Ascending aorta (tissue), 2 donors: ENCODE measurements at regions of chr3 and their contacts with region 1.

Region 1: GRCh38 chr3:149650828-149651227 is 7.0 kb downstream of the WWTR1 start:
- DNase-seq: no peak
- H3K4me3 ChIP-seq: peak overlapping the region in 1 of 2 donors; percentile 14
- H3K27ac ChIP-seq: peak overlapping the region; percentile 4 to 59
- H3K4me1 ChIP-seq: peaks cover 25 to 41% of the 10 kb centered on the region in 2 donors
- H3K27me3 ChIP-seq: no peaks in the 10 kb centered on the region
- CTCF ChIP-seq: no peak

Region 2: GRCh38 chr3:149596136-149596770 is 54.6 kb before region 1 on chr3:
- intact Hi-C with region 1: loop called (anchors 2 kb)
- DNase-seq: no peak
- H3K4me3 ChIP-seq: peak overlapping the region in 1 of 2 donors; percentile 25
- H3K27ac ChIP-seq: peak overlapping the region; percentile 55 to 70
- H3K4me1 ChIP-seq: peaks cover 19 to 76% of the 10 kb centered on the region in 2 donors
- H3K27me3 ChIP-seq: no peaks in the 10 kb centered on the region
- CTCF ChIP-seq: no peak

Region 3: GRCh38 chr3:149621218-149622005 is 29.4 kb before region 1 on chr3:
- intact Hi-C with region 1: no loop called
- DNase-seq: no peak
- H3K4me3 ChIP-seq: peak overlapping the region; percentile 0 to 2
- H3K27ac ChIP-seq: peak overlapping the region; percentile 85 to 86
- H3K4me1 ChIP-seq: peaks cover 23 to 76% of the 10 kb centered on the region in 2 donors
- H3K27me3 ChIP-seq: no peaks in the 10 kb centered on the region
- CTCF ChIP-seq: no peak